GM12878 (cell line): ENCODE measurements at regions of chr10 and their contacts with region 1.

Region 1: GRCh38 chr10:15433850-15434537 is 62.9 kb upstream of the FAM171A1 start:
- DNase-seq: no peak
- ATAC-seq: peak; percentile 74
- H3K4me3 ChIP-seq: no peak overlapping the region
- H3K27ac ChIP-seq: no peak overlapping the region
- H3K4me1 ChIP-seq: no peaks in the 10 kb centered on the region
- H3K27me3 ChIP-seq: no peaks in the 10 kb centered on the region
- CTCF ChIP-seq: peak; percentile 53 to 58 (median 54)
- EP300 ChIP-seq: no peak
- POLR2A ChIP-seq: no peak
- RAD21 ChIP-seq: peak; percentile 50

Region 2: DNA sequence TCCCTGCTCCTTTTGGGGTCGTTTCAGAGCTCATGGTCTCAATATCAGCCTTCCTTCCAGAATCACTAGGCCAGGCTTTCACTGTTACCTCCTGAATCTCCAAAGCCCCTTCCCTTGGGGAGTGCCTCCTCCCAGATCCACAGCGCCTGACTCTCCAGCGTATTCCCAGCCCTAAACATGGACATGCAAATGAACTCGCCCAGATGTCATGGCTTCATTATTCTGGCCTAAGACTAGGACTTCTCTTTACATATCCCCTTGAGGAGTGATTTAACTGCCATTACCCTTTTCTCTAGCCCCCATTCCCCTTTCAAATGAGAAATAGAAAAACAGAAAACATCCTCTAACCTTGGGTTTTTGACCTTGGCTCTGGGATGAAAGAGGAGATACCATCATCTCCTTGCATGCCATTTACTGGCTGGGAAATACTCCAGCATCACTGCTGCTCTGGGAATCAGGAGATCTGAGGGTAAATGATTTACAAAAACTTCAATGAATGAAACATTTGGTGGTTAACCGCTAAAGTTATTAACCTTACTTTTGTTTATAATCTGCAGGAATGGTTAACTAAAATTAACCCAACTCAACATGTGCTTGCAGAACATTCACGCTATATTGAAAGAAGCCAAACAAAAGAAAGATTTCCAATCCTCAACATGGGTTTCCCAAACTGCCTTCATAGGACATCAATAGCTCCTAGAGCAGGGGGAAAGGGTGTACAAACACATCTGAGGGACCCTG is 99.9 kb before region 1 on chr10:
- CTCF ChIA-PET with region 1: no interaction called
- POLR2A ChIA-PET with region 1: no interaction called
- RAD21 ChIA-PET with region 1: no interaction called
- SMC1A ChIA-PET with region 1: no interaction called
- in situ Hi-C with region 1: no loop called
- intact Hi-C with region 1: no loop called
- DNase-seq: no peak
- ATAC-seq: no peak
- H3K4me3 ChIP-seq: no peak overlapping the region
- H3K27ac ChIP-seq: no peak overlapping the region
- H3K4me1 ChIP-seq: no peaks in the 10 kb centered on the region
- H3K27me3 ChIP-seq: no peaks in the 10 kb centered on the region
- CTCF ChIP-seq: no peak
- EP300 ChIP-seq: no peak
- POLR2A ChIP-seq: no peak
- RAD21 ChIP-seq: no peak

Region 3: DNA sequence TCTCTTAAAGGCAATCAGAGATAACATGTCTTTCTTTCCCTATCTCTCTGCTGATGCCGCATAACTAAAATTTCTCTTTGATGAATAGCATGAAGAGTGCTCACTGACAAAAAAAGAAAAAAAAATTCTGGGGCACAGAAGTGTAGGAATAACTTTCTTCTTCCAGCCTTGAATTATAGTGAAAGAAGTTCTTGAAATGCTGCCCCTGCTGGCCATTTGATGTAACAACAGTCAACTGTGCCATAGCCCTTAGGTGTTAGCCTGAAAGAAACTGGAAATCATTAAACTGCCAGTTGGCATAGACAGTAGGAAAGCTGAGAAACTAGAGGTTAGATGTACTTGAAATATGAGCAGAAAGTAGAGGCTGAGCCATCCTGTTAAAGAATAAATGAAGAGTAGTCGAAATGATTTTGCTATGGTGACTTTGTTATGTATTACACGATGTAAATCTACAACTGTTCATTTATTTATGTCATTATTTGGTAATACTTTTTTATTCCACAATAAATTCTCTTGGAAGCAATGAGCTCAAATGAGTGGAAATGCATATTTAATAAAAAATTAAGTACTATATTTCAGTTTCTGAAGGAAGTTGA is 14.6 kb before region 1 on chr10:
- CTCF ChIA-PET with region 1: interaction called, 13 read pairs
- POLR2A ChIA-PET with region 1: no interaction called
- RAD21 ChIA-PET with region 1: no interaction called
- SMC1A ChIA-PET with region 1: no interaction called
- in situ Hi-C with region 1: no loop called
- intact Hi-C with region 1: no loop called
- DNase-seq: no peak
- ATAC-seq: peak; percentile 73
- H3K4me3 ChIP-seq: no peak overlapping the region
- H3K27ac ChIP-seq: no peak overlapping the region
- H3K4me1 ChIP-seq: no peaks in the 10 kb centered on the region
- H3K27me3 ChIP-seq: no peaks in the 10 kb centered on the region
- CTCF ChIP-seq: peak; percentile 52 to 76 (median 73)
- EP300 ChIP-seq: no peak
- POLR2A ChIP-seq: no peak
- RAD21 ChIP-seq: no peak

Region 4: GRCh38 chr10:15660990-15661389 is 227.0 kb after region 1 on chr10:
- CTCF ChIA-PET with region 1: no interaction called
- POLR2A ChIA-PET with region 1: no interaction called
- RAD21 ChIA-PET with region 1: no interaction called
- SMC1A ChIA-PET with region 1: no interaction called
- in situ Hi-C with region 1: no loop called
- intact Hi-C with region 1: no loop called
- DNase-seq: no peak
- ATAC-seq: no peak
- H3K4me3 ChIP-seq: no peak overlapping the region
- H3K27ac ChIP-seq: no peak overlapping the region
- H3K4me1 ChIP-seq: no peaks in the 10 kb centered on the region
- H3K27me3 ChIP-seq: no peaks in the 10 kb centered on the region; a peak in 1 of 4 replicates
- CTCF ChIP-seq: no peak
- EP300 ChIP-seq: no peak
- POLR2A ChIP-seq: no peak
- RAD21 ChIP-seq: no peak

Region 5: DNA sequence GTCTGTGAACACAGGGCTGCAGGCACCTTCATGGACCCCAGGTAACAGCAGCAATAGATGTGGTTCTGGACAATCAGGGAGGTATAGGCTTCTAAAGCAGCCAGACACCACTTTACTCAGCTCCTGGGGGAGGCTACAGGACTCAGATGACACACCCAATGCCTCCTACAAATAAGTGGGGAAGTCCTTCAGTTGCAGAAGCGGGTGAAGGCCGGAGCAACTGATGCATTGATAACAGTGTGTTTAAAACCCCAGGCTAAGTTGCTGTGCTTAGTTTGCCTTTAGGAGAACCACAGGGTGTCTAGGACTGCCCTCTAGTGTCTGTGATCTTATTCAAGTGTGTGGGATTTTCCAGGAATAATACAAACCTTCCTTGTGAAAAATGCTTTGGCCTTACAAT is 291.6 kb after region 1 on chr10:
- CTCF ChIA-PET with region 1: interaction called, 4 read pairs
- POLR2A ChIA-PET with region 1: no interaction called
- RAD21 ChIA-PET with region 1: interaction called, 3 read pairs
- SMC1A ChIA-PET with region 1: interaction called, 3 read pairs
- in situ Hi-C with region 1: loop called (anchors 5 kb)
- intact Hi-C with region 1: no loop called
- DNase-seq: no peak
- ATAC-seq: peak; percentile 54; the same call in 2 of the 3 replicates
- H3K4me3 ChIP-seq: no peak overlapping the region
- H3K27ac ChIP-seq: no peak overlapping the region
- H3K4me1 ChIP-seq: no peaks in the 10 kb centered on the region
- H3K27me3 ChIP-seq: no peaks in the 10 kb centered on the region; a peak in 1 of 4 replicates
- CTCF ChIP-seq: peak; percentile 40 to 61 (median 44); a peak in 4 of 6 replicates
- EP300 ChIP-seq: no peak
- POLR2A ChIP-seq: no peak
- RAD21 ChIP-seq: peak; percentile 68

Region 6: DNA sequence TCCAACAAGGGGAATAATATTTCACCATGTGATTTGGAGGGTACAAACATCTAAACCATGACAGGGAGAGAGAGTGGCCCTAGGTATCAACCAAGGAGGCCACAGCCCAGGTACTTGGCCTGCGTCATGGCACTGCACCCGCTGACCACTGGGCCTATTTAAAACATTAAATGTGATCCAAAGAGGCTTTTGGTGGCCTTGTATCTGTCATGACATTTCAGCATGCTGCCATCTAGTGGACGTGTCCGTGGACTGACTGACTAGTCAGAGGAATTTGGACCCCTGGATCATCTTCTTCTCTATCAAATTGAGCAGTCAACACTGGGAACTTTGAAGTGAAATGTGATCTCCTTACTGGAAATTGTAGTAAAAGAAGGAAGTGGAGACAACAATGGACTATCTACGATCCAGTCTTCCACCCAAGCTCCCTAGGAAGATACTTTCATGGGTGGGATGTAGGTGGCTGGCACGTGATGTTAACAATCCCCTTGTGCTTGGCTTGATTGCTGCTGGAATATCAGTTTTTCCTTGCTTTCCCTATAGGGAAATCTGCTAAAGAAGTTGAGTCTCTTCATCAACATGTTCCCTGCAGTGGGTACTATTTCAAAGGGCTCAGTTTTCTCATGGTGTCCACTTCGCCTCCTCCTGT is 310.3 kb after region 1 on chr10:
- CTCF ChIA-PET with region 1: interaction called, 3 read pairs
- POLR2A ChIA-PET with region 1: no interaction called
- RAD21 ChIA-PET with region 1: no interaction called
- SMC1A ChIA-PET with region 1: interaction called, 5 read pairs
- in situ Hi-C with region 1: no loop called
- intact Hi-C with region 1: loop called (anchors 5 kb)
- DNase-seq: no peak
- ATAC-seq: peak; percentile 88
- H3K4me3 ChIP-seq: no peak overlapping the region
- H3K27ac ChIP-seq: no peak overlapping the region
- H3K4me1 ChIP-seq: no peaks in the 10 kb centered on the region
- H3K27me3 ChIP-seq: no peaks in the 10 kb centered on the region
- CTCF ChIP-seq: peak; percentile 48 to 73 (median 55)
- EP300 ChIP-seq: no peak
- POLR2A ChIP-seq: no peak
- RAD21 ChIP-seq: peak; percentile 48; the same call in 1 of the 2 replicates

Region 7: GRCh38 chr10:15824498-15824897 is 390.5 kb after region 1 on chr10:
- CTCF ChIA-PET with region 1: interaction called, 3 read pairs
- POLR2A ChIA-PET with region 1: no interaction called
- RAD21 ChIA-PET with region 1: no interaction called
- SMC1A ChIA-PET with region 1: interaction called, 3 read pairs
- in situ Hi-C with region 1: loop called (anchors 10 kb)
- intact Hi-C with region 1: no loop called
- DNase-seq: no peak
- ATAC-seq: no peak
- H3K4me3 ChIP-seq: no peak overlapping the region
- H3K27ac ChIP-seq: no peak overlapping the region
- H3K4me1 ChIP-seq: no peaks in the 10 kb centered on the region
- H3K27me3 ChIP-seq: no peaks in the 10 kb centered on the region
- CTCF ChIP-seq: peak in 1 of 3 experiments; percentile 33; a peak in 2 of 6 replicates
- EP300 ChIP-seq: no peak
- POLR2A ChIP-seq: no peak
- RAD21 ChIP-seq: peak; percentile 44; the same call in 1 of the 2 replicates